ENCODE measurements at regions of chr15 and their contacts with region 1.

Region 1: GRCh38 chr15:36415643-36416042 is 163.8 kb upstream of the CDIN1 start:
- DNase-seq: no peak
- H3K4me3 ChIP-seq: no peak overlapping the region
- H3K27ac ChIP-seq: no peak overlapping the region
- H3K4me1 ChIP-seq: no peaks in the 10 kb centered on the region
- H3K27me3 ChIP-seq: no peaks in the 10 kb centered on the region
- CTCF ChIP-seq: no peak
- POLR2A ChIP-seq: no peak

Region 2: DNA sequence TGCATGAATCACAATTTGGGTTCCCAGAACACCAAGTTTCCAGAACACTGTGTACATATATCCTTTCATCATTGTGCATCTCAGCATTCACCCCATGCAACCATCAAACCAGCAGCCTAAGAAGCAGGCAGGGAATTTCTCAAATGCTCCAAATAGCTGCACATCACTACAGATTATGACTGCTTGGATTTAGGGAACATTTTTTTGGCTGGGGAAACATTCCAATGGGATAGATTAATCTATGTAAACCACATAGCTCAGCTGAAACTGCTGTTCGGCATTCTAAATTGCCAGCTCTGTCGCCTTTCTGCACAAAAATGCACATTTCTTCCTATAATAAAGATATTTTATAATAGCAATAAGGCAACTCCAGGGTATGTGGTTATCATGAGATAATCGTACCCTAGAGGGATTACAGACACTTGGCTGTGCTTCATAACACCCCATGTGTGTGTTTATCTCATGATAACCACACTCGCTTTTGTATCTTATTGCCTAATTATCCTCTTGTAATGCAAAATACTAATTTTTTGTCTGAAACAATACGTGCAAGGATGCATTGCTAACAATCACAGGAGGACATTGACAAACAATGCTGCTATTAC is 385.9 kb before region 1 on chr15:
- intact Hi-C with region 1: loop called in 1 of 2 experiments (anchors 10 kb)
- DNase-seq: no peak
- H3K4me3 ChIP-seq: no peak overlapping the region
- H3K27ac ChIP-seq: no peak overlapping the region
- H3K4me1 ChIP-seq: no peaks in the 10 kb centered on the region
- H3K27me3 ChIP-seq: no peaks in the 10 kb centered on the region
- CTCF ChIP-seq: no peak
- POLR2A ChIP-seq: no peak

Measured in adrenal gland (tissue), 19 donors.